A549 (cell line): ENCODE measurements at regions of chr10 and their contacts with region 1.

Region 1: DNA sequence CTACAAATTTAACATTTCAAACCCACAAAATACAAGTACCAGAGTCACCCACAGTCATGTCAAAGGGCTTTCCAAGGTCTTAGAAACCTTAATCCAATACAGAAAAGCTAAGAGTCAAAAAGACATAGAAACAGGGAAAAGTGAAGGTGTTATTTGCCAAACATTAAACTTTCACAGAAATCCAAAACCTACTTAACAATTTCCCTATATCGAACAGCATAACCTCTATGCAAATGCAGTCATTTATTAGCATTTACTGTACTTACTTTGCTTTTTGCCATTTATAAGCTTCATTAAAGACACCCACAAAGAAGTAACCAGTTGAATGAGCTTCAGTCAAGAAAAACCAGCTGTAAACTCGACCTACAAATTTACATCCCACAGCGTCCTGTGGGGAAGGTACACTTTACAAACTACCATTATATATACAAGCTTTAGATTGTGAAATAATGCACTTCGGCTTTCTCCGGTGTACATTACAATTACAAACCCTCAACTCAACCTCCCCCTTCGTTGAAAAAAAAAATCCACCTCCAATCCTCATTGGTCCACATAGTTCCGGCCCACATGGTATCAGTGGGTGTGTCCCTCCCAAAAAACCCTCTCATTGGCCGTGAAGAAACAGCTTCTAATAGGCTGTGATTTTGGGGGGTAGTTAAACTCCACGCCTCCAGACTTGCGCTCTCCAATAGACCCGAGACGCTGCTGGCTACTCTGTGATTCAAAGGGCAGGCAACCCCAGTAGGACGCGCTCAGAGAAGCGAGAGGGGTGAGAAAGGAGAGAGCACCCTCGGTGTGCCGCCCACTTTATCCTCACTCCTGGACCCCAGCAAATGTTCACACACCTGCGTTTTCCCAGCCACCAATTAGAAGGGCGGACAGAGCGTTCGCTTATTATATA is 1.4 kb downstream of the PANK1 start:
- DNase-seq: peak; percentile 95
- ATAC-seq: peak; percentile 88 to 94
- H3K4me3 ChIP-seq: peak overlapping the region; percentile 77
- H3K27ac ChIP-seq: peak overlapping the region; percentile 97
- H3K4me1 ChIP-seq: peaks cover 16% of the 10 kb centered on the region
- CTCF ChIP-seq: no peak
- EP300 ChIP-seq: no peak
- POLR2A ChIP-seq: peak; percentile 98
- RAD21 ChIP-seq: no peak; a peak in 1 of 5 replicates

Region 2: DNA sequence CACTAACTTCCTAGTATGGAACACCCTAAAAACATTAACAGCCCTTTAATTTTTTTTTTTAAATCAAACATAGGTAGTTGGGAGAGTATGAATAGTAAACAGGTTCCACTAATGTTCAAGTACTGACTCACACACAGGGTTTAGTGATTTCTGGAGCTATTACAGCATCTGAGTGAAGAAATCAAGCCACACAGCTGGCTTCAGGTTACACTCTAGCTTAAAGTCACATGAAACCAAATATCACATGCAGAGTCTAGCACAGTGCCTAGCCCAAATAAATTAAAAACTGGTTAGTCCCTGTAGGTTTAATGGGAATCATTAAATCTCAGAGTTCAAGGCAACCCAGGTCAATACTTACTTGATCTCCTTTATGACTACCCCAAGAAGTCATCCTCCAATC is 10.2 kb before region 1 on chr10:
- CTCF ChIA-PET with region 1: interaction called, 4 read pairs
- POLR2A ChIA-PET with region 1: interaction called, 25 read pairs
- DNase-seq: peak in 1 of 2 experiments; percentile 24
- ATAC-seq: peak; percentile 71 to 86
- H3K4me3 ChIP-seq: no peak overlapping the region
- H3K27ac ChIP-seq: peak overlapping the region in 1 of 2 experiments; percentile 52; a peak in 2 of 6 replicates
- H3K4me1 ChIP-seq: peaks cover 37% of the 10 kb centered on the region
- CTCF ChIP-seq: no peak
- EP300 ChIP-seq: no peak
- POLR2A ChIP-seq: no peak
- RAD21 ChIP-seq: no peak

Region 3: GRCh38 chr10:89668386-89669071 is 24.8 kb after region 1 on chr10:
- CTCF ChIA-PET with region 1: no interaction called
- POLR2A ChIA-PET with region 1: no interaction called
- DNase-seq: no peak
- ATAC-seq: no peak
- H3K4me3 ChIP-seq: no peak overlapping the region
- H3K27ac ChIP-seq: no peak overlapping the region
- H3K4me1 ChIP-seq: no peaks in the 10 kb centered on the region
- CTCF ChIP-seq: no peak
- EP300 ChIP-seq: no peak
- POLR2A ChIP-seq: no peak
- RAD21 ChIP-seq: no peak

Region 4: DNA sequence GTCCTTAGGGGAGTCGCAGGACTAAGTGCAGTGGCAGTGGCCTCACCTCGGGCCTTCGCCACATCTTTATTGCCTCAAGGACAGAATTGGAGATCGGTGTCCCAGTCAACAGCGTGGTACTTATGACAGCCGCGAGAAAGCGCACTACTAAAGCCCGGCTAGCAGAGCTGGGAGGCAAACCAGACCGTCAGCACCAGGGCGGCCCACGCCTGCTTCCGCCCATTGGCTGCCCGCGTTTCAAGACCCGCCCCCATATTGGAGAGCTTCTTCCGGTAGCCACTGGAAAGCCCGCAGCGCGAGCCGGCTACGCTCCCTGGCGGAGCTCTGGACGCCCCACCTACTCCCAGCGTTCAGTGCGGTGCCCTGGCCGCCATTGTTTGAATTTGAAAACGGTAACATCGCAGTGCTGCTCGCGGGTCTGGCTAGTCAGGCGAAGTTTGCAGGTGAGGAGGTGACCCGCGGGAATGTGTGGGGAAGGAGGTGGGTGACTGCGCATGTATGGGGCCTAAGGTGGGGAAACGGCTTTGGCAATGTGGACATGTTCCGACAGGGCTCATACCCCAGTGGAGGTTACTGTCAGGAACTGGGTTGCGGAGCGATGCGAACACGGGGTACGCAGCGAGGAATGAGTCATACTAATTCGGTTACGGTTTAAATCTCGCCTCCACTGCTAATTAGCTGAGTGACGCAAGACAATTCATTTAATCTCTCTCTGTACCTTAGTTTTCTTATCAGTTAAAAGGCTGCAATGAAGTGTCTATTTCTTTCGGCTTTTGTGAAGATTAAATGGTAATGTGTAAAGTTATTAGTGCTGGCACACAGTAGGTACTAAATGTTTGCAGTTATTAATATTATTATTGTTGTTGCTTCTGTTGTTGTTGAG is 57.8 kb after region 1 on chr10 and contains the start of gene KIF20B:
- CTCF ChIA-PET with region 1: interaction called, 4 read pairs
- POLR2A ChIA-PET with region 1: interaction called, 38 read pairs
- DNase-seq: peak; percentile 92 to 96
- ATAC-seq: peak; percentile 99 to 100
- H3K4me3 ChIP-seq: peak within 1 kb of the TSS; percentile 54
- H3K27ac ChIP-seq: peak within 1 kb of the TSS; percentile 81 to 88
- H3K4me1 ChIP-seq: peaks cover 25% of the 10 kb centered on the region; the same call in 2 of the 3 replicates
- CTCF ChIP-seq: no peak
- EP300 ChIP-seq: no peak
- POLR2A ChIP-seq: peak; percentile 71
- RAD21 ChIP-seq: peak; percentile 27 to 31; a peak in 3 of 5 replicates
- polyA plus RNA-seq, gene KIF20B: 14.2 and 14.8 TPM in 2 replicates